Activated CD4-positive, alpha-beta memory T cell treated with anti-CD3 and anti-CD28 coated beads for 36 hours (primary cell): ENCODE measurements at regions of chr14 and their contacts with region 1.

Region 1: GRCh38 chr14:56579345-56580220 is at the start of gene TMEM260:
- DNase-seq: peak; percentile 93
- H3K4me3 Mint-ChIP-seq: peak within 1 kb of the TSS; percentile 94
- H3K27ac Mint-ChIP-seq: peak within 1 kb of the TSS; percentile 95
- H3K4me1 Mint-ChIP-seq: peaks cover 38% of the 10 kb centered on the region
- H3K27me3 Mint-ChIP-seq: no peaks in the 10 kb centered on the region
- total RNA-seq, gene TMEM260: 11.4 to 13.2 TPM

Region 2: GRCh38 chr14:56650048-56650447 is 70.5 kb after region 1 on chr14:
- CTCF ChIA-PET with region 1: no interaction called
- POLR2A ChIA-PET with region 1: no interaction called
- intact Hi-C with region 1: no loop called
- DNase-seq: no peak
- H3K4me3 Mint-ChIP-seq: no peak overlapping the region
- H3K27ac Mint-ChIP-seq: no peak overlapping the region
- H3K4me1 Mint-ChIP-seq: no peaks in the 10 kb centered on the region
- H3K27me3 Mint-ChIP-seq: no peaks in the 10 kb centered on the region

Region 3: GRCh38 chr14:57060276-57060955 is 480.8 kb after region 1 on chr14:
- CTCF ChIA-PET with region 1: interaction called, 4 read pairs
- POLR2A ChIA-PET with region 1: no interaction called
- intact Hi-C with region 1: loop called (anchors 2 kb)
- DNase-seq: peak; percentile 61
- H3K4me3 Mint-ChIP-seq: peak overlapping the region; percentile 22
- H3K27ac Mint-ChIP-seq: peak overlapping the region; percentile 55
- H3K4me1 Mint-ChIP-seq: peaks cover 32% of the 10 kb centered on the region
- H3K27me3 Mint-ChIP-seq: peaks cover 4% of the 10 kb centered on the region

Region 4: GRCh38 chr14:57268161-57269069 is 688.8 kb after region 1 on chr14 and contains the starts of genes AP5M1 and EXOC5:
- CTCF ChIA-PET with region 1: interaction called, 5 read pairs
- POLR2A ChIA-PET with region 1: no interaction called
- intact Hi-C with region 1: loop called (anchors 2 kb)
- DNase-seq: peak; percentile 96
- H3K4me3 Mint-ChIP-seq: peak within 1 kb of the TSS; percentile 99
- H3K27ac Mint-ChIP-seq: peak within 1 kb of the TSS; percentile 99
- H3K4me1 Mint-ChIP-seq: peaks cover 48% of the 10 kb centered on the region
- H3K27me3 Mint-ChIP-seq: no peaks in the 10 kb centered on the region
- total RNA-seq, gene AP5M1: 27.7 to 31.1 TPM
- total RNA-seq, gene EXOC5: 82.1 to 82.6 TPM